Calu3 (cell line): ENCODE measurements at regions of chr1 and their contacts with region 1.

Region 1: GRCh38 chr1:236795035-236795756 is at the start of gene MTR:
- DNase-seq: peak; percentile 99
- H3K4me3 Mint-ChIP-seq: peak within 1 kb of the TSS; percentile 97
- H3K27ac Mint-ChIP-seq: peak within 1 kb of the TSS; percentile 95
- H3K4me1 Mint-ChIP-seq: peaks cover 9% of the 10 kb centered on the region
- H3K27me3 Mint-ChIP-seq: no peaks in the 10 kb centered on the region
- CTCF ChIP-seq: no peak
- total RNA-seq, gene MTR: 30.4 and 37.0 TPM in 2 replicates

Region 2: DNA sequence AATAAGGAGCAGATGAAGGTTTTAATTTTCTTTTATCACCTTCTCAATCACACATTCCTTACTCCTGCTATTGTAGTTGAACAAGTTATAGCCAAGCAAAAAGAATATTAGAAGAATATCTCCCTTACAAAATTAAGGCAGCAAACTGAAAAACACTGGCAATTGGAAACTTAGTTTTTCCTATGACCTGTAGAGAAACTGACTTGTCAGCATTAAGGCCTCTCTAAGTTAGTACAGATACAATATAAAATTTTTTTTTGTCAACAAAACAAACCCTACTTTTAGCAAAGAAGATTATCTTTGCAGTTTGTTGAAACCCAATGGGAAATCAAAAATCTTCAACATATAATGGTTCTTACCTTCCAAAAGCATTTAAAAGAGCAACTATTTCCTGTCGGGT is 574.7 kb before region 1 on chr1:
- CTCF ChIA-PET with region 1: interaction called, 13 read pairs
- intact Hi-C with region 1: no loop called
- DNase-seq: no peak
- H3K4me3 Mint-ChIP-seq: no peak overlapping the region
- H3K27ac Mint-ChIP-seq: no peak overlapping the region
- H3K4me1 Mint-ChIP-seq: no peaks in the 10 kb centered on the region
- H3K27me3 Mint-ChIP-seq: no peaks in the 10 kb centered on the region
- CTCF ChIP-seq: no peak

Region 3: DNA sequence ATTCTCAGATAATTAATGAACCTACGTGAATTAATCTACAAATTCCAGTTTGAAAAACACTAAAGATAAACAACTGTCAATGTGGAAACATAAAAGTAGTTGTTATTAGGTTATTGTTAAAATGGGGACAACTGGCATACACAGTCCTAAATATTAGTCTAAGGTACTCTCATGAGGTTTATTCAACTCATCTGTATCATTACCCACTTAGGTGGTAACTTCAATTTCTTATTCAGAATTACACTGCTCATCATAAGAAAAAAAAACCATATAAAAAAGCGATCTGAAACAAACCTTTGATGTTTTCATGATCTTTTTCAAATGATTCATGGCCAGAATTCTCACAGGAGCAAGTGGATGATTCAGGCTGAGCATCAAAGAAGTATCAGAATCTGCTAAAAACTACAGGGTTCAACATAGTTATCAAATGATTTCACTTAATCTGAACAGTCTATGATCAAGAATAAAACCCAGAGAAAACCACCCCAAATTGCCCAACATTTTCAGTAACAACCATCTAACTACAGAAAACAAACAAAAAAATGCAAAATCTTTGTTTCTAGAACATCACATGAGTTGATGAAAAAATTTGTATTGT is 204.5 kb before region 1 on chr1:
- CTCF ChIA-PET with region 1: no interaction called
- intact Hi-C with region 1: no loop called
- DNase-seq: no peak
- H3K4me3 Mint-ChIP-seq: no peak overlapping the region
- H3K27ac Mint-ChIP-seq: no peak overlapping the region
- H3K4me1 Mint-ChIP-seq: no peaks in the 10 kb centered on the region
- H3K27me3 Mint-ChIP-seq: no peaks in the 10 kb centered on the region
- CTCF ChIP-seq: no peak

Region 4: DNA sequence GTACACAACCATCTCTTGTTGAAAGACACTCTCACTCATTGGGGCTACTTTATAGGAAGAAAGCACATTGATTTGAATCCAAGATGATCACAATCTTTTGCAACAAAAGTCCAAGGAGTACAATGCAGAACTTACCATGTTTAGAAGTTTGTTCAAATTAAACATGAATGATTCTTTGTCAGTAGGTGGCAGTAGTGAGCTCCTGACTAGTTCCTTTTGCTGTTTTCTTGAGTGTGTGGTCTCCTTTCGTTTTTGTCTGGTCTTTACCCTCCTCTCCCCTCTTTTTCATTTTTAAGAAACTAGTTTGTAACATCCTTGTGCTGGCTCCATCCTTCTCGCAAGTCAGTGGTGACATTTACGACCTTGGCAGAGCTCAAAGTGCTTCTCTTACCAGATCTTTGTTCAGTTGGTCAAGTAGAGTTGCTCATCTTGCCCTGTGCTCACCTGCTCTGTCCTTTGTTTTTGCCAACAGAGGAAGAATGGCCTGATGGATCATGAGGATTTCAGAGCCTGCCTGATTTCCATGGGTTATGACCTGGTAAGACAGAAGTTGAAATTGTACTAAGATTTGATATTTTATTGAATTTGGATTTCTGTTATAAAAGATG is 35.8 kb before region 1 on chr1:
- CTCF ChIA-PET with region 1: interaction called, 5 read pairs
- intact Hi-C with region 1: loop called (anchors 5 kb)
- DNase-seq: peak; percentile 12
- H3K4me3 Mint-ChIP-seq: no peak overlapping the region
- H3K27ac Mint-ChIP-seq: no peak overlapping the region
- H3K4me1 Mint-ChIP-seq: no peaks in the 10 kb centered on the region
- H3K27me3 Mint-ChIP-seq: no peaks in the 10 kb centered on the region
- CTCF ChIP-seq: peak; percentile 60

Region 5: DNA sequence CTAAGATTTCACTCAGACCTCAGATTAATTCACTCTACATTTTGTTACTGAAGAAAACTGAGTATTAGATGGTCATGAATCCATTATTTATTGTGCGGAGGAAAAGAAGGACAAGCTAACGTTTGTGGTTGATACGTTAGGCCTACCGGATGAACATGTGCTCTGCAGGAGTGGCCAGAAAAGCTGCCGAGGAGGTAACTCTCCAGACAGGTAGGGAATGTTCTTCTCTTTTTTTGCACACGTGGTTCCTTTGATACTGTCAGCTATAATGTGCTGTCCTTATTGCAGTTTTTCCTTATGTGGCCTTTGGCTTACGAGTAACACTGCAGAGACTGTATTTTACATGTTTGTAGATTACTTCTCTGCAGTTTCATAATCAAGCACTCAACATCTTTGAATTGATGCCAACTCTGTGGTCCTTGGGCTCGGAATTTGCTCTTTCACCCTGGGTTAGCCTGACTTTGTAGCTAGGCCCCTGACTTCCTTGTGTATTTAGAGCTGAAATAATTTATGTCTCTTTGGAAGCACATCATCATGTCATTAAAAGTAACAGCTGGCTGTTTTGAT is 13.5 kb after region 1 on chr1:
- CTCF ChIA-PET with region 1: interaction called, 5 read pairs
- intact Hi-C with region 1: loop called (anchors 1 kb)
- DNase-seq: peak; percentile 12
- H3K4me3 Mint-ChIP-seq: no peak overlapping the region
- H3K27ac Mint-ChIP-seq: peak overlapping the region; percentile 43
- H3K4me1 Mint-ChIP-seq: peaks cover 18% of the 10 kb centered on the region
- H3K27me3 Mint-ChIP-seq: no peaks in the 10 kb centered on the region
- CTCF ChIP-seq: no peak

Region 6: DNA sequence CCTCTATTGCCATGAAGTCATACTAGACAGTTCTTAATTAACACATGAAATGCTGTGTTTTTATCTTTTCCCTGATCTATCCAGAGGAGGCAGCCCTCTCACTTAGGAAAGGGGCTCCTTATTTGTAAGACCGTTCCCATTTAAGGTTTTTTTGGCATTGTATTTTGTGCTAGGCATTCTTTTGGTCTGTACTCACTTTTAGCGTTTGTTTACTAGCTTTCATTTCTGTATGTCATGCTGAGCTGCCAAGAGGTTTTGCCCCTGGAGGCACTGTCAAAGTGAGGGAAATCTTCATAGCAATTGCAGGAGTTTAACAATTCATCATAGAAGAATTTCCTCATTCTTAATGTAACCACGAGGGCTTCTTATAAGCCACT is 59.4 kb after region 1 on chr1:
- CTCF ChIA-PET with region 1: no interaction called
- intact Hi-C with region 1: no loop called
- DNase-seq: no peak
- H3K4me3 Mint-ChIP-seq: no peak overlapping the region
- H3K27ac Mint-ChIP-seq: no peak overlapping the region
- H3K4me1 Mint-ChIP-seq: no peaks in the 10 kb centered on the region
- H3K27me3 Mint-ChIP-seq: no peaks in the 10 kb centered on the region
- CTCF ChIP-seq: no peak

Region 7: DNA sequence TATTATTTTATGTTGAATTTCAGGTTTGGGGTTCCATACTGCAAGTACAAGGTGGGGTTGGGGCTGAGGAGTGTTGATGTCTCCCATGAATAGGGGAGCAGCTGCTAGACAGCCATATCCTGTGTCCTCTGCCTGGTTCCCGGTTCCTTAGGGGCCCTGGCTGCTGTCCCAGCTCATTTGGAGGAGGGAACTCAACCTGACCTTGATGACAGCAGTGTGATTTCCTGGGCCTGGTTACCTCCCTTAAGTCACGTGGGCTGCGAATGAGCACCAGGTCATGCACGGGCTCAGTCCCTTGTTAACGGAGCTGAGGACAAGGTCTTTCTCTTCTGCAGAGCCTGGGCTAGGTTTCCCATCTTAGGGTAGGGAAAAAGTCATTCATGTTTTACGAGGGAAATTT is 85.0 kb after region 1 on chr1:
- CTCF ChIA-PET with region 1: no interaction called
- intact Hi-C with region 1: no loop called
- DNase-seq: no peak
- H3K4me3 Mint-ChIP-seq: no peak overlapping the region
- H3K27ac Mint-ChIP-seq: no peak overlapping the region
- H3K4me1 Mint-ChIP-seq: no peaks in the 10 kb centered on the region
- H3K27me3 Mint-ChIP-seq: no peaks in the 10 kb centered on the region
- CTCF ChIP-seq: no peak

Region 8: GRCh38 chr1:237084258-237085077 is 289.3 kb after region 1 on chr1:
- CTCF ChIA-PET with region 1: no interaction called
- intact Hi-C with region 1: no loop called
- DNase-seq: no peak
- H3K4me3 Mint-ChIP-seq: no peak overlapping the region
- H3K27ac Mint-ChIP-seq: no peak overlapping the region
- H3K4me1 Mint-ChIP-seq: no peaks in the 10 kb centered on the region
- H3K27me3 Mint-ChIP-seq: peaks cover 13% of the 10 kb centered on the region
- CTCF ChIP-seq: no peak